ENCODE measurements at regions of chr22 and their contacts with region 1.

Region 1: GRCh38 chr22:38872172-38872830 is at the start of gene CBX6:
- DNase-seq: peak; percentile 94
- H3K4me3 Mint-ChIP-seq: peak within 1 kb of the TSS; percentile 96
- H3K27ac Mint-ChIP-seq: peak within 1 kb of the TSS; percentile 94
- H3K4me1 Mint-ChIP-seq: peaks cover 63% of the 10 kb centered on the region
- H3K27me3 Mint-ChIP-seq: no peaks in the 10 kb centered on the region
- total RNA-seq, gene CBX6: 91.4 to 93.5 TPM

Region 2: DNA sequence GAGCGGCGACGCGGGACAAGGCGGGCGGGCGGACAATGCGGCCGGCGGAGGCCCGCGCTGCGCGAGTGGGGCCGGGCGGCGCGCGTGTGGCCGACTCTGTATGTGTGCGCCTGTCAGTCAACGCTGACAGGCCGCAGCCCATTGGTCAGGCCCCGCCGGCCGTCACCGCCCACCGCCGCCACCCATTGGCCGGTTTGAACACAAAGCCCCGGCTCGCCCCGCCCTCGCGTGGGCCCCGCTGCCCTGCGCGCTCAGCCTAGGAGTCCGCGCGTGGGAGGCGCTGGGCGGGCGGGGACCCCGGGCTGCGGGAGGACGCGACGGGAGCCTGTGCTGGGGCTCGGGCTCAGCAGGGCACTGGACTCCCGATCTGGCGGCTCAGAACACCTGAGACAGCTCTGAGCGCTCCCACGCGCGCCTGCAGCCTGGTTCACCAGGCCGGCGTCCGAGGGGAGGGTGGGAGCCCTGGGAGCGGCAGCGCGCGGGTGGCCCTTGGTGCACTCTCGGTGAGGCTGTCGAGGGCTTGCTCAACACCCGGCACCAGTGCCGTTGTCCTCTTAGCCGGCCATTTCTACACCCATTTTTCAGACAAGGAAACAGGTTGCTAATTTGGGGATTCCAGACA is 116.3 kb before region 1 on chr22 and contains the start of gene SUN2:
- CTCF ChIA-PET with region 1: interaction called, 4 read pairs
- intact Hi-C with region 1: loop called (anchors 2 kb)
- DNase-seq: peak; percentile 94
- H3K4me3 Mint-ChIP-seq: peak within 1 kb of the TSS; percentile 92
- H3K27ac Mint-ChIP-seq: peak within 1 kb of the TSS; percentile 92
- H3K4me1 Mint-ChIP-seq: peaks cover 52% of the 10 kb centered on the region
- H3K27me3 Mint-ChIP-seq: no peaks in the 10 kb centered on the region
- total RNA-seq, gene SUN2: 120 to 121 TPM

Region 3: DNA sequence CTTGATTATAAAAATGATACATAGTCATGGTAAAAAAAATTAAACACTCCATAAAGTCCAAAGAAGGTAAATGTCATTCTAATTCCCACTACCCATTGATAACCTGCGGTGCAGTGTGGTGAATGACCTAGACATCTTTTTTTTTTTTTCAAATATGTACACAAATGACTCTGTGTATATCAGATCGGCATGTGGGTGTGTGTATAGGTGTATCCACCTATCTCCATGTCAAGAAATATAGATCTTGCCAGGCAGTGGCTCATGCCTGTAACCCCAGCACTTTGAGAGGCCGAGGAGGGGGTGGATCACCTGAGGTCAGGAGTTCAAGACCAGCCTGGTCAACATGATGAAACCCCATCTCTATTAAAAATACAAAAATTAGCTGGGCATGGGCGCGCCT is 18.1 kb after region 1 on chr22:
- CTCF ChIA-PET with region 1: no interaction called
- intact Hi-C with region 1: no loop called
- DNase-seq: no peak
- H3K4me3 Mint-ChIP-seq: no peak overlapping the region
- H3K27ac Mint-ChIP-seq: no peak overlapping the region
- H3K4me1 Mint-ChIP-seq: no peaks in the 10 kb centered on the region
- H3K27me3 Mint-ChIP-seq: peaks cover 5% of the 10 kb centered on the region

Region 4: GRCh38 chr22:38953577-38954413 is 81.5 kb after region 1 on chr22:
- CTCF ChIA-PET with region 1: interaction called, 9 read pairs
- intact Hi-C with region 1: loop called (anchors 1 kb)
- DNase-seq: peak; percentile 94
- H3K4me3 Mint-ChIP-seq: peak overlapping the region; percentile 55
- H3K27ac Mint-ChIP-seq: peak overlapping the region; percentile 91
- H3K4me1 Mint-ChIP-seq: peaks cover 22% of the 10 kb centered on the region
- H3K27me3 Mint-ChIP-seq: no peaks in the 10 kb centered on the region

Region 5: DNA sequence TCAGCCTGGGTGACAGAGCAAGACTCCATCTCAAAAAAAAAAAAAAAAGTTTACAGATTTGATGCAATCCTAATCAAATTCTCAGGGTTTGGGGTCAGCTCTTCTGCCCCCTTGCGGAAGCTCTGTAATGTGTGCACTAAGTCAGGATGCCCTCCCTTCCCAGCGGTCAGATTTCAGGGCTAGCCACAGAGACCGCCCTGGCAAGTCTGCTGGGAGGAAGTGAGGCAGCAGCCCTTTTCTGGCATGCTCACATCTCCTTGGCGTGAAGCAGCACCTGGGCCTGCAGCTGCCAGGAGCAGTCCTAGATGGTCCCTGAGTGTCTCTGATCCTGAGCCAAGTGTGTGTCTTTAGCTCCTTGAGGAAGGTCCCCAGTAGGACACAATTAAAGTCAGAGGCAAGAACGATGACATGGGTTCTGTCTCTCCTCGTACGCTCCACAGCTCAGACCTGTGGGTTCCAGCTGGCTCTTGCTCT is 130.9 kb after region 1 on chr22:
- CTCF ChIA-PET with region 1: interaction called, 51 read pairs
- intact Hi-C with region 1: loop called (anchors 1 kb)
- DNase-seq: peak; percentile 86
- H3K4me3 Mint-ChIP-seq: no peak overlapping the region
- H3K27ac Mint-ChIP-seq: no peak overlapping the region
- H3K4me1 Mint-ChIP-seq: peaks cover 9% of the 10 kb centered on the region
- H3K27me3 Mint-ChIP-seq: no peaks in the 10 kb centered on the region

Region 6: GRCh38 chr22:39122786-39123475 is 250.6 kb after region 1 on chr22:
- CTCF ChIA-PET with region 1: interaction called, 7 read pairs
- intact Hi-C with region 1: loop called (anchors 1 kb)
- DNase-seq: no peak
- H3K4me3 Mint-ChIP-seq: no peak overlapping the region
- H3K27ac Mint-ChIP-seq: no peak overlapping the region
- H3K4me1 Mint-ChIP-seq: peaks cover 7% of the 10 kb centered on the region
- H3K27me3 Mint-ChIP-seq: no peaks in the 10 kb centered on the region

Region 7: DNA sequence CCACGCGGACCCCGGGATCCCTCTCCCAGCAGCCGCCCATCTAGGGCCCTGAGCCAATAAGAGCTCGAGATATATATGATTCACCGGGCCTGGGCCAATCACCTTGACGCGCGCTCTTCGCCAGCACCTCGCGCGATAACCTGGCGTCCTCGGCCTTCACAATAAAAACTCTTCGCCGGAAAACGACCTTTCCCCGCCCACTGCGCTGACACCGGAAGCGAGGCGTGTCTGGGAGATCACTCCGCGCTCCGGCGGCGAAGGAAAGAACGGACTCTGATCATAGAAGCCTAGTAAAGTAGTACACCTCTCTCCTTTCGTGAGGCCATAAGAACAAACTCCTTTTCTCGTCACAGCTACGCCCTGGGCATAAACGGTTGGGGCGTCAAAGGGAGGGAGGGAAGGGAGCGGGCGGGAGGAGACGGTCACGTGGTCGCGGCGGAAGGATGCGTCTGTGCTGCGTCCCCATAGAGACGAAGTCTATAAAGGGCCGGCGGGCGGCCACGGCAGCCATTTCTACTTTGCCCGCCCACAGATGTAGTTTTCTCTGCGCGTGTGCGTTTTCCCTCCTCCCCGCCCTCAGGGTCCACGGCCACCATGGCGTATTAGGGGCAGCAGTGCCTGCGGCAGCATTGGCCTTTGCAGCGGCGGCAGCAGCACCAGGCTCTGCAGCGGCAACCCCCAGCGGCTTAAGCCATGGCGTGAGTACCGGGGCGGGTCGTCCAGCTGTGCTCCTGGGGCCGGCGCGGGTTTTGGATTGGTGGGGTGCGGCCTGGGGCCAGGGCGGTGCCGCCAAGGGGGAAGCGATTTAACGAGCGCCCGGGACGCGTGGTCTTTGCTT is 648.0 kb after region 1 on chr22 and contains the start of gene ATF4:
- CTCF ChIA-PET with region 1: no interaction called
- intact Hi-C with region 1: loop called (anchors 5 kb)
- DNase-seq: peak; percentile 98
- H3K4me3 Mint-ChIP-seq: peak within 1 kb of the TSS; percentile 83
- H3K27ac Mint-ChIP-seq: peak within 1 kb of the TSS; percentile 95
- H3K4me1 Mint-ChIP-seq: peaks cover 64% of the 10 kb centered on the region
- H3K27me3 Mint-ChIP-seq: peaks cover 2% of the 10 kb centered on the region
- total RNA-seq, gene ATF4: 589 to 609 TPM

Measured in activated naive CD4-positive, alpha-beta T cell treated with anti-CD3 and anti-CD28 coated beads for 36 hours (primary cell).